GM18951 (cell line): ENCODE measurements at regions of chr11 and their contacts with region 1.

Region 1: GRCh38 chr11:109845437-109845836 is 247.8 kb upstream of the ZC3H12C start:
- POLR2A ChIP-seq: no peak

Region 2: GRCh38 chr11:109929308-109929707 is 83.9 kb after region 1 on chr11:
- in situ Hi-C with region 1: loop called (anchors 10 kb)
- POLR2A ChIP-seq: no peak

Region 3: GRCh38 chr11:109971184-109971523 is 125.7 kb after region 1 on chr11:
- in situ Hi-C with region 1: no loop called
- POLR2A ChIP-seq: no peak